Heart left ventricle (tissue), 16 donors: ENCODE measurements at regions of chr15 and their contacts with region 1.

Region 1: GRCh38 chr15:48800811-48801455 is 9.9 kb downstream of the CEP152 start:
- DNase-seq: no peak
- ATAC-seq: no peak
- H3K4me3 ChIP-seq: peak overlapping the region in 1 of 12 donors; percentile 24
- H3K27ac ChIP-seq: peak overlapping the region in 2 of 12 donors; percentile 23 to 30
- H3K4me1 ChIP-seq: peaks cover 0 to 15% (median 1%) of the 10 kb centered on the region in 12 donors
- H3K27me3 ChIP-seq: no peaks in the 10 kb centered on the region
- CTCF ChIP-seq: peak; percentile 20 to 66 (median 51)
- POLR2A ChIP-seq: no peak

Region 2: DNA sequence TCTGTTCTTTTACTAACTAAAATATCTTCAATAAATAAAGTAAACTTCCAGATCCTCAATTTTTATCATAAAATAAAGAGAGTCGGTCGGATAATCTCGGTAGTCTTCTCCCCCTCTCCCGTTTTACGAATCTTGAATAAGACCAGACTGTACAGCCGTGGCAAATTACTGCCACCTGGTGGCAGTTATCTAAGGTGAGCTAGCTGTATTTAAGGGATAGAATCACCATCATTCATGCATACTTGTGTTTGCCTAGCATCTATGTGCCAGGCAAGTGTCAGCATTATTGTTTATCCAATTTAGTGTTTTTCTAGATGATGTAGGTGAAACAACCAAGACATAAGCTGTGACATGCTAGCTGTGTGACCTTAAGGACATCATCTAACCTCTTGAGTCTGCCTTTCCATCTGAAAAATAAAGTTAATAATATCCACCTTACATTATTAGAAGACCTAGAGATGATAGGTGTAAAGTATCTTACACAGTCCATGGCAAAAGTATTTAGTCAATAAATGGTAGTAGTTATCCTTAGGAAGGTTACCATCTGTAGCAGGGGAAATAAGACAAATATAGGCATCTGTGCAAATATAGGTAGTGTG is 448.4 kb before region 1 on chr15:
- intact Hi-C with region 1: loop called in 7 of 10 experiments (anchors 5 to 10 kb)
- DNase-seq: peak in 4 of 5 donors; percentile 28 to 50 (median 36)
- ATAC-seq: peak in 3 of 4 donors; percentile 68 to 71 (median 70)
- H3K4me3 ChIP-seq: peak overlapping the region in 1 of 12 donors; percentile 16
- H3K27ac ChIP-seq: no peak overlapping the region
- H3K4me1 ChIP-seq: peaks cover 0 to 8% (median 0%) of the 10 kb centered on the region in 12 donors
- H3K27me3 ChIP-seq: no peaks in the 10 kb centered on the region
- CTCF ChIP-seq: peak; percentile 67 to 87 (median 76)
- POLR2A ChIP-seq: no peak

Region 3: DNA sequence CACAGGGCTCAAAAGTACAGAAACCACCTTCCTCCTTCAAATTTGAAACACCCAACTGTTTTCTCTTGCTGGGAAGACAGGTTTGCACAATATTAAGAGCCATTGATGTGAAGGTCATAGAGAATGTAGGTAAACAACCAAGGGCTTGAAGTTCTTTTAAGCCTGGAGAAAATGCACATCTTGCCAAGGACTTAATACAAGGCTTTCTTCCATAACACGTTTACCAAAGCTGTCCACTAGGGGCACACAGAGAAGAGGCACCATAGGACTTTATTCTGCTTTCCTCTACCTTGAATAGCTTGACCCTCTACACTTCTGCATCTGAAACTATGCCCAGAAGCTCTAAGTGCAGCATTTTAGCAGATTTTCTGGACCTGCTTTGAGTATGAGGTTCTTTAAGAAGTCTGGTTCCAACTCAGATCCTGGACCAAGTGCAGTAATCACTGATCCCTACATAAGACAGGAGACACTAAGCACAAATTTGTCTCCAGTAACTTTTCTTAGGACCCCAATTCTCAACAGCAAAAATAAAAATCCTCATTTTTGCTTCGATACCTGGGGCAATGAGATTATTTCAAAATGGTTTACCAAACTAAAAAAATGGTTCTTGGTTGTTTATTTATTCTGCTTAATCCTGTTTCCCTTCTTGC is 293.4 kb before region 1 on chr15:
- intact Hi-C with region 1: loop called in 1 of 10 experiments (anchors 10 kb)
- DNase-seq: no peak
- ATAC-seq: peak in 2 of 4 donors; percentile 39 to 55
- H3K4me3 ChIP-seq: no peak overlapping the region
- H3K27ac ChIP-seq: no peak overlapping the region
- H3K4me1 ChIP-seq: peaks cover 0 to 16% (median 0%) of the 10 kb centered on the region in 12 donors
- H3K27me3 ChIP-seq: no peaks in the 10 kb centered on the region
- CTCF ChIP-seq: peak; percentile 38 to 63 (median 50)
- POLR2A ChIP-seq: no peak

Region 4: GRCh38 chr15:48602358-48603122 is 198.4 kb before region 1 on chr15:
- intact Hi-C with region 1: loop called in 1 of 10 experiments (anchors 10 kb)
- DNase-seq: no peak
- ATAC-seq: peak in 3 of 4 donors; percentile 28 to 86 (median 83)
- H3K4me3 ChIP-seq: peak overlapping the region in 8 of 12 donors; percentile 4 to 40 (median 26)
- H3K27ac ChIP-seq: peak overlapping the region in 11 of 12 donors; percentile 44 to 81 (median 71)
- H3K4me1 ChIP-seq: peaks cover 0 to 42% (median 20%) of the 10 kb centered on the region in 12 donors
- H3K27me3 ChIP-seq: no peaks in the 10 kb centered on the region
- CTCF ChIP-seq: no peak
- POLR2A ChIP-seq: no peak